Naive thymus-derived CD4-positive, alpha-beta T cell (primary cell): ENCODE measurements at regions of chr9 and their contacts with region 1.

Region 1: GRCh38 chr9:128504485-128505413 is at the start of gene GLE1:
- DNase-seq: peak; percentile 93 to 99 (median 97)
- ATAC-seq: peak; percentile 98
- H3K4me3 ChIP-seq: peak within 1 kb of the TSS; percentile 97
- H3K4me3 Mint-ChIP-seq: peak within 1 kb of the TSS; percentile 92 to 100 (median 99)
- H3K27ac ChIP-seq: peak within 1 kb of the TSS; percentile 92
- H3K27ac Mint-ChIP-seq: peak within 1 kb of the TSS; percentile 82 to 100 (median 99)
- H3K4me1 ChIP-seq: peaks cover 8 to 11% of the 10 kb centered on the region in 2 donors
- H3K4me1 Mint-ChIP-seq: peaks cover 0 to 38% (median 34%) of the 10 kb centered on the region in 7 donors
- H3K27me3 ChIP-seq: no peaks in the 10 kb centered on the region
- H3K27me3 Mint-ChIP-seq: no peaks in the 10 kb centered on the region
- total RNA-seq, gene GLE1: 14.2 to 46.5 (median 30.5) TPM

Region 2: GRCh38 chr9:128438343-128439109 is 66.2 kb before region 1 on chr9:
- CTCF ChIA-PET with region 1: no interaction called
- POLR2A ChIA-PET with region 1: no interaction called
- intact Hi-C with region 1: loop called (anchors 1 to 2 kb)
- DNase-seq: peak; percentile 40 to 86 (median 70)
- ATAC-seq: peak; percentile 97
- H3K4me3 ChIP-seq: no peak overlapping the region
- H3K4me3 Mint-ChIP-seq: no peak overlapping the region
- H3K27ac ChIP-seq: no peak overlapping the region
- H3K27ac Mint-ChIP-seq: no peak overlapping the region
- H3K4me1 ChIP-seq: no peaks in the 10 kb centered on the region
- H3K4me1 Mint-ChIP-seq: peaks cover 0 to 6% (median 4%) of the 10 kb centered on the region in 7 donors
- H3K27me3 ChIP-seq: no peaks in the 10 kb centered on the region
- H3K27me3 Mint-ChIP-seq: no peaks in the 10 kb centered on the region

Region 3: DNA sequence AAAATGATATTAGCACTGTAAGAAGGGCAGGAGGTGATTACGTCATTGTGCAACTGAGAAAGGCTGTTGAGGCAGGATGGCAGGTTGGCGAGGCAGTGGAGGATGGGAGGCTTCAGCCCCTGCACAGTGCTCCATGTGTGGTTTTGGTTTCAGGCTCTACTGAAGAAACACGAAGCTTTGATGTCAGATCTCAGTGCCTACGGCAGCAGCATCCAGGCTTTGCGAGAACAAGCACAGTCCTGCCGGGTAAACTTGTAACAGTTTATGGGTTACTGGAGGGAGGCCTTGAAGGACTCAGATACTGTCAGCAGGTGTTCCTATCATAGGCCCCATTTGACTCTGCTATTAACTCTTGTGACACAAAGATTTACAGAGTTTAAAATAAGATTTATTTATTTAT is 82.7 kb after region 1 on chr9:
- CTCF ChIA-PET with region 1: no interaction called
- POLR2A ChIA-PET with region 1: no interaction called
- intact Hi-C with region 1: loop called in 1 of 2 experiments (anchors 1 kb)
- DNase-seq: peak in 8 of 9 donors; percentile 43 to 80 (median 72)
- ATAC-seq: peak; percentile 96
- H3K4me3 ChIP-seq: no peak overlapping the region
- H3K4me3 Mint-ChIP-seq: peak overlapping the region in 7 of 10 donors; percentile 4 to 55 (median 26)
- H3K27ac ChIP-seq: peak overlapping the region; percentile 44
- H3K27ac Mint-ChIP-seq: peak overlapping the region; percentile 77 to 93 (median 86)
- H3K4me1 ChIP-seq: peaks cover 0 to 4% of the 10 kb centered on the region in 2 donors
- H3K4me1 Mint-ChIP-seq: peaks cover 4 to 15% (median 9%) of the 10 kb centered on the region in 7 donors
- H3K27me3 ChIP-seq: no peaks in the 10 kb centered on the region
- H3K27me3 Mint-ChIP-seq: no peaks in the 10 kb centered on the region